Colonic mucosa (tissue), 4 donors: ENCODE measurements at regions of chr11 and their contacts with region 1.

Region 1: DNA sequence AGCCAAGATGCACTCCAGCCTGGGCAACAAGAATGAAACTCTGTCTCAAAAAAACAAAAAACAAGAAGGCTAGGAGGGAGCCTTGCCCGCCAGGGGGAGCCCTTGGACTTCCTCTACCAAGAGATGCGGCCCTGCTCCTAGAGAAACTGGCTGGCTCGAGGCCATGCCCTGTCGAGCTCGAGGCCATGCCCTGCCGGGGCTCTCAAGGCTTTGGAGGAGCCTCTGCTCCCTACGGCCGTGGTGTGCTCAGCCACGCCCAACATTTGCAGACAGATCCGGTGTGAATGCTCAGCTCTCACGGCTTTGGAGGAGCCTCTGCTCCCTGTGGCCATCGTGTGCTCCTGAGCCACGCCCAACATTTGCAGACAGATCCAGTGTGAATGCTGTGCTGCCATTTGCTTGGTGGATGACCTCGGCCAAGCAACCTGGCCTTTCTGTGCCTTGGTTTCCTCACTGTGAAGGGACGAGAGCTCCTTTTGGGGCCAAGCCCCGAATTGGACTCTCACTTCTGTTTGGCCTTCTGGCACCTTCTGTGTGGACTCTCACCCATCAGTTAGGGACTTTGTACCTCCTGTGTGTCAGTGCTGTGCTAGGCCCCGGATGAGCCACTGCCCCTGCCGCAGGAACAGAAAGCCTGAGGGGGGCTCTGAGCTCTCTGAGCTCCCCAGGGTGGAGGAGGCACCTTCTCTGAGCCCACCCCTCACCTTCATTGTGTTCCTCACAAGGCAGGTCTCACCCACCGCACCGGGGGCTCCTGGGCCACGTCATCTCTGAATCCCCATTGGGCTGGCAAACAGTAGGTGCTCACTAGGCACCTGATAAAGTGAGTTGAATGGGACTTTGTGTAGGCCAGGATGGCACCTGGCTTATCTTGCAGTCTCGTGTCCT is 14.1 kb downstream of the C11orf24 start:
- DNase-seq: peak; percentile 98
- H3K4me3 ChIP-seq: no peak overlapping the region
- H3K27ac ChIP-seq: no peak overlapping the region
- H3K4me1 ChIP-seq: peaks cover 9% of the 10 kb centered on the region
- H3K27me3 ChIP-seq: no peaks in the 10 kb centered on the region
- CTCF ChIP-seq: peak; percentile 77

Region 2: DNA sequence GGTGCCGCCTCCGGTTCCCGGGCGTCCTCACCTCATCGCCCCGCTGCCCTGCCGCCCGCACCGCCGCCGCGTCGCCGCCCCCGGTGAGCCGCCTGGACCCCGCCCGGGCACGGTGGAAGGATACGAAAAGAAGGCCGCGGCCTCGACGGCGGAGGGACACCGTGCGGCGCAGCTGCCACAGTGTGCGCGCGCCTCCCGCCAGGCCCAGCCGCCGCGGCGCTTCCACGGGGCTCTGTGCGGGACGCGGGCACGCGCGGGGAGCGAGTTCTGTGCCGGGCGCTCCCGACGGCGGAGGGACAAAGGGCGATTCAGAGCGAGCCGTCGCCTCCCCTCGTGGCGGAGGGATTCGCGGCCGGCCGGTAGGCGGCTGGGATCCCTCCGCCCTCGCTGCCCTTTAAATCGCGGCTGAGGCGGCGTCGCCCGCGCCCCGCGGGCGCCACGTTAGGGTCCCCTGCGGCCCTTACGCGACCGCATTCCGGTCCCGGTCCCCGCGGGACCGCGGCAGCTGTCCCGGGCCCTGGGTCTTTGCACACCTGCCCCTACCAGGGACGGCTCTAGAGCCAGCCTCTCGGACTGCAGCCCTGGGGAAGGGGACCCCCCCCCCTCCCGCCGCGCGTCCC is 44.1 kb before region 1 on chr11:
- intact Hi-C with region 1: no loop called
- DNase-seq: peak; percentile 79
- H3K4me3 ChIP-seq: peak overlapping the region; percentile 78
- H3K27ac ChIP-seq: peak overlapping the region; percentile 99
- H3K4me1 ChIP-seq: peaks cover 16% of the 10 kb centered on the region
- H3K27me3 ChIP-seq: no peaks in the 10 kb centered on the region
- CTCF ChIP-seq: no peak

Region 3: GRCh38 chr11:68297812-68298658 is 40.3 kb after region 1 on chr11:
- intact Hi-C with region 1: loop called (anchors 2 kb)
- DNase-seq: peak; percentile 95
- H3K4me3 ChIP-seq: no peak overlapping the region
- H3K27ac ChIP-seq: peak overlapping the region; percentile 90
- H3K4me1 ChIP-seq: peaks cover 15% of the 10 kb centered on the region
- H3K27me3 ChIP-seq: no peaks in the 10 kb centered on the region
- CTCF ChIP-seq: peak; percentile 98

Region 4: GRCh38 chr11:68383976-68384501 is 126.3 kb after region 1 on chr11:
- intact Hi-C with region 1: loop called (anchors 5 kb)
- DNase-seq: peak; percentile 79
- H3K4me3 ChIP-seq: no peak overlapping the region
- H3K27ac ChIP-seq: no peak overlapping the region
- H3K4me1 ChIP-seq: peaks cover 28% of the 10 kb centered on the region
- H3K27me3 ChIP-seq: no peaks in the 10 kb centered on the region
- CTCF ChIP-seq: peak; percentile 95

Region 5: DNA sequence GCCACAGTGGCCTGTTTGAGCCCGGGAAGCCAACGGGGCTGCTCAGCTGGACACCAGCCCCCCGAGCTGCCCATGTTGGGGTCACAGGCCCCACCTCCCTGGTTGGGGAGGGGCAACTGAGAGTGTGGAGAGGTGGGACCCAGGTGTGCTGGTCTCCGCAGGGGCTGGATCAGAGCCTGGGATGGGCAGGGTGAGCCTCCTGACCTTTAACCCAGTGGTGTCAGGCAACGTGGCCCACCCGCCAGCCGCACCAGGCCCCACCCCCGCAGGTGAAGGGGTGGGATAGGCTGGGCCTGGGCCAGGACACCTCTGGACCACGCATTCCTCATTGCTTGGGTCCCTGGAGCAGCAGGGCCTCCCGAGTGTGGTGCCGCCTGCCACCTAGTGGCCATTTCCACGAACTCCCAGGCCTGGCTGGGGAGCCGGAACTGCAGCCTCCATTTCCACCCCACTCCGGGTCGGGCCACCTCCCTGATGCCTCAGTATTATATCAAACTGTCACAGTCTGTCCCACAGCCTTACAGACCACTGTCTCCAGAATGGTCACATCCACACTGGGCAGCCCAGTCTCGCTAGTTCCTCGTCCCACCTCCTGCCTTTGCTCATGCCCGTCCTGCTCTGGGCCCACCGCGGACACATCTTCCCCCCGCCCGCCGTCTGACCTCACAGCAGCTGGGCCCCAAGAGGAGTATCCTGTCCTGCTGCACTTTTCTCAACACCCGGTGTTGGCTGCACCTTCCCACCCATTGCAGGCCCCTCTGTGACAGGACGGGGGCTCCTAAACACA is 189.5 kb after region 1 on chr11:
- intact Hi-C with region 1: loop called (anchors 5 kb)
- DNase-seq: peak; percentile 81
- H3K4me3 ChIP-seq: no peak overlapping the region
- H3K27ac ChIP-seq: no peak overlapping the region
- H3K4me1 ChIP-seq: no peaks in the 10 kb centered on the region
- H3K27me3 ChIP-seq: no peaks in the 10 kb centered on the region
- CTCF ChIP-seq: peak; percentile 94